CD8-positive, alpha-beta T cell (primary cell): ENCODE measurements at regions of chr5 and their contacts with region 1.

Region 1: DNA sequence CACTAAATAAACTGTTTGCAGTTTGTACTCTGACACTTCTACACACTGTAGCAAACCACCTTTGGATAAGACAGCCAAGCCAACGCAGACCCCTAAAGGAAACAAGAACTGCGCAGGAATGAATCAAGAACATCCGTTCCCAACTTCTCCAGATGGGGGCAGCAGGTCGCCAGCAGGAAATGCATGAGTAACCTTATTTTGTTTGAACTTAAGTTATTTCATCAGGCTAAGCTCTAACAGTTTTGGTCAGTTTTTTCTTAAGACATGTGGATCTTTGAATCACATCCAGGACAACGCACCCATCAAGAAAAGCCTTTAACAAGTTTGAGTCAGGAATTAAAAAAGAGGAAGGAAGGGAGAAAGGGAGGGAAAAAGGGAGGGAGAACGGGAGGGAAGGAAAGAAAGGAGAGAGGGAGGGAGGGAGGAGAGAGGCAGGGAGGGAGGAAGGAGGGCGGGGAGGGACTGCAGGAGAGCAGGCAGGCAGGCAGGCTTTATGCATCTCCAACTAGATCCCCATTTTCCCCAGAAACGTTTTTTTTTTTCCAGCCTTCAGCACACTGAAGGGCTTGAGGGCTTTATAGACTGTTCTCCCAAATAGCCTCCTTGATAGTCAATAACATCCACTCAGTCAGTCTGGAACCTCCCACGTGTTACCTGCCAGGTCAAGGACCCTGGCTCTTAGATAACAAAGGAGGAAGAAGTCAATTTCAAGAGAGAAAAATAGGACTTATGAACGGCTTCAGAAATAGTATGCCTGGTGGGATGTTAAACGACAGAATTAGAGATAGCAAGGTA is 22.2 kb downstream of the BHMT start:
- DNase-seq: peak; percentile 30 to 76 (median 66)
- ATAC-seq: peak; percentile 81
- H3K4me3 ChIP-seq: peak overlapping the region in 1 of 2 experiments; percentile 40
- H3K4me3 Mint-ChIP-seq: peak overlapping the region; percentile 71
- H3K27ac ChIP-seq: no peak overlapping the region
- H3K27ac Mint-ChIP-seq: no peak overlapping the region
- H3K4me1 ChIP-seq: peaks cover 11% of the 10 kb centered on the region
- H3K4me1 Mint-ChIP-seq: peaks cover 8% of the 10 kb centered on the region
- H3K27me3 ChIP-seq: no peaks in the 10 kb centered on the region
- H3K27me3 Mint-ChIP-seq: no peaks in the 10 kb centered on the region
- CTCF ChIP-seq: peak; percentile 23

Region 2: GRCh38 chr5:78320401-78320800 is 813.5 kb before region 1 on chr5:
- CTCF ChIA-PET with region 1: interaction called, 3 read pairs
- POLR2A ChIA-PET with region 1: no interaction called
- intact Hi-C with region 1: loop called (anchors 2 to 5 kb)
- DNase-seq: peak in 2 of 9 experiments; percentile 29 to 47
- ATAC-seq: no peak
- H3K4me3 ChIP-seq: no peak overlapping the region
- H3K4me3 Mint-ChIP-seq: no peak overlapping the region
- H3K27ac ChIP-seq: no peak overlapping the region
- H3K27ac Mint-ChIP-seq: no peak overlapping the region
- H3K4me1 ChIP-seq: no peaks in the 10 kb centered on the region
- H3K4me1 Mint-ChIP-seq: no peaks in the 10 kb centered on the region
- H3K27me3 ChIP-seq: no peaks in the 10 kb centered on the region
- H3K27me3 Mint-ChIP-seq: peaks cover 3% of the 10 kb centered on the region
- CTCF ChIP-seq: peak; percentile 70

Region 3: GRCh38 chr5:78886341-78887230 is 247.3 kb before region 1 on chr5:
- CTCF ChIA-PET with region 1: interaction called, 6 read pairs
- POLR2A ChIA-PET with region 1: no interaction called
- intact Hi-C with region 1: loop called (anchors 1 to 5 kb)
- DNase-seq: peak in 2 of 9 experiments; percentile 9 to 28
- ATAC-seq: no peak
- H3K4me3 ChIP-seq: no peak overlapping the region
- H3K4me3 Mint-ChIP-seq: no peak overlapping the region
- H3K27ac ChIP-seq: no peak overlapping the region
- H3K27ac Mint-ChIP-seq: no peak overlapping the region
- H3K4me1 ChIP-seq: peaks cover 8% of the 10 kb centered on the region
- H3K4me1 Mint-ChIP-seq: peaks cover 16% of the 10 kb centered on the region
- H3K27me3 ChIP-seq: no peaks in the 10 kb centered on the region
- H3K27me3 Mint-ChIP-seq: no peaks in the 10 kb centered on the region
- CTCF ChIP-seq: peak; percentile 51

Region 4: DNA sequence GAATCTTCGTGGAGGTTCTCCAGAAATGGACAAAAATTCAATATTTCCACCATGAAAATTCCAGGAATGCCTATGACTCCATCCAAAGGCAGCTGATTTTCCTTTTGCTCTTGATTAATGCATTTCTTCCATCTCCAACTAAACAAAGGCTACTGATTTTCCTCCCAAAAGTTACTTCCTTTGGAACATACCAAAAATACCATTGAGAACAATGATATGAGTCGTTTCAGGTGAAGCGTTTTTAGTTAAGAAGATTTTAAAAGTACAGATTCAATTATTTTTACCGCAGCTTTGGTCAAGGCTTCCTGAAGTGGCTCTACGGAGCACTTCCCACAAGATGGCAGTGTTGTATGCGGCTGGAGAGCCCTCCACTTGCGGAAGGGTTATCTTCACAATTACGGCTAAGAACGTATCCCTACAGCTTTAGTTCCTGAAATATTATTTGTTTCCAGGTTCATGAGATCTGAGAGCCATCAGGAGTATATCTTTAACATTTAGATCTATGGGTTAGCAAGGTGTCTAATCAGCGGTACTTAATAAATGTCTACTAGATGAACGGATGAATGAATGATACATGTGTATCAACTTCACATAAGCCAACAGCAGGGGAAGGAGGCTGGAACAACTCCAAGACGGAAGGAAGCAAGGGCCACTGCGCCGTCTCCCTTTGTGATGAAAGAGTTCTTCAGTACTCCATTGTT is 112.8 kb before region 1 on chr5:
- CTCF ChIA-PET with region 1: interaction called, 30 read pairs
- POLR2A ChIA-PET with region 1: no interaction called
- intact Hi-C with region 1: loop called (anchors 1 to 2 kb)
- DNase-seq: peak in 5 of 9 experiments; percentile 18 to 54 (median 33)
- ATAC-seq: peak; percentile 38
- H3K4me3 ChIP-seq: no peak overlapping the region
- H3K4me3 Mint-ChIP-seq: no peak overlapping the region
- H3K27ac ChIP-seq: no peak overlapping the region
- H3K27ac Mint-ChIP-seq: no peak overlapping the region
- H3K4me1 ChIP-seq: no peaks in the 10 kb centered on the region
- H3K4me1 Mint-ChIP-seq: peaks cover 11% of the 10 kb centered on the region
- H3K27me3 ChIP-seq: peaks cover 0 to 5% of the 10 kb centered on the region in 2 experiments
- H3K27me3 Mint-ChIP-seq: peaks cover 45% of the 10 kb centered on the region
- CTCF ChIP-seq: peak; percentile 35

Region 5: DNA sequence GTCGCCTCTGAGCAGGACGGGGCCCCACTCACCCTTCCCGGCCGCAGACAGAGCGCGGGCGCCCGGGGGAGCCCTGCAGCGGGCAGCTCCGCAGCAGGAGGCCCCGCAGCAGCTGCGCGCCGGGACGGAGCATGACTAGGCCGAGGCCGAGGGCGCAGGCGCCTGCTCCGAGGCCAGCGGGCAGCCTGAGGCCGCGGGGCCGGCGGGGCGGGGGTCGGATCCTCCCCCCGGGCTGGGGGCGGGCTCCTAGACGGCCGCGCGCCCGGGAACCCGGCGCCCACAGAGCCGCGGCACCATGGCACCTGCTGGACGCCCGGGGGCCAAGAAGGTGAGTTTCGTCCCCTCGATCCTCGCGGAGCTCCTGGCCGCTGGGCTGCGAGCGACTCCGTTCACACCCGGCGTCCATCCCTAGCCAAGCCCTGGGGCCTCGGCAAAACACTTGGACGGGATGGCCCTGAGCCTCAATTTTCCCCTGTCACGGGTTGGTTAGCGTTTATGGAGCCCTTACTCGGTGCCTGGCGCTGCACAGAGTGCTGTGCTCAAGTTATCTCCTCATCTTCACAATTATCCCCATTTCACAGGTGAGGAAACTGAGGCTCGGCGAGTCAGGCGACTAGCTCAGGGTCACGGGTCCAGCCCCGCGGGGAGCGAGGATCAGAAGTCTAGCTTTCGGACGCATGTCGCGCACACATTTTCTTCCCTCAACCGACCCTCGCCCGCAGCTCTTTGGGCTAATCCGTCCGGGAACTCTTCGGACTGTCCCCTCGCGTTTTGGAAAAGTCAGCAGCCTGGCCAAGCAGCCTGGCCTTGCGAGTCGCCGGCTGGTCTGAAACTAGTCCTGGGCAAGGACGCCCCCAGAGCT is 64.1 kb before region 1 on chr5 and contains the starts of genes BHMT2 and DMGDH:
- CTCF ChIA-PET with region 1: no interaction called
- POLR2A ChIA-PET with region 1: no interaction called
- intact Hi-C with region 1: no loop called
- DNase-seq: no peak
- ATAC-seq: no peak
- H3K4me3 ChIP-seq: no peak within 1 kb of the TSS
- H3K4me3 Mint-ChIP-seq: no peak within 1 kb of the TSS
- H3K27ac ChIP-seq: no peak within 1 kb of the TSS
- H3K27ac Mint-ChIP-seq: no peak within 1 kb of the TSS
- H3K4me1 ChIP-seq: no peaks in the 10 kb centered on the region
- H3K4me1 Mint-ChIP-seq: peaks cover 2% of the 10 kb centered on the region
- H3K27me3 ChIP-seq: peaks cover 0 to 3% of the 10 kb centered on the region in 2 experiments
- H3K27me3 Mint-ChIP-seq: peaks cover 39% of the 10 kb centered on the region
- CTCF ChIP-seq: no peak
- total RNA-seq, gene BHMT2: not detected
- total RNA-seq, gene DMGDH: 0.90 TPM in 1 of 2 experiments, not detected in the other

Region 6: GRCh38 chr5:79120216-79120615 is 13.6 kb before region 1 on chr5:
- CTCF ChIA-PET with region 1: interaction called, 29 read pairs
- POLR2A ChIA-PET with region 1: no interaction called
- intact Hi-C with region 1: no loop called
- DNase-seq: no peak
- ATAC-seq: no peak
- H3K4me3 ChIP-seq: no peak overlapping the region
- H3K4me3 Mint-ChIP-seq: no peak overlapping the region
- H3K27ac ChIP-seq: no peak overlapping the region
- H3K27ac Mint-ChIP-seq: no peak overlapping the region
- H3K4me1 ChIP-seq: no peaks in the 10 kb centered on the region
- H3K4me1 Mint-ChIP-seq: no peaks in the 10 kb centered on the region
- H3K27me3 ChIP-seq: no peaks in the 10 kb centered on the region
- H3K27me3 Mint-ChIP-seq: peaks cover 6% of the 10 kb centered on the region
- CTCF ChIP-seq: no peak

Region 7: GRCh38 chr5:79464695-79465332 is 331.0 kb after region 1 on chr5:
- CTCF ChIA-PET with region 1: interaction called, 16 read pairs
- POLR2A ChIA-PET with region 1: no interaction called
- intact Hi-C with region 1: loop called (anchors 1 kb)
- DNase-seq: peak in 2 of 9 experiments; percentile 15 to 42
- ATAC-seq: peak; percentile 66
- H3K4me3 ChIP-seq: no peak overlapping the region
- H3K4me3 Mint-ChIP-seq: no peak overlapping the region
- H3K27ac ChIP-seq: no peak overlapping the region
- H3K27ac Mint-ChIP-seq: no peak overlapping the region
- H3K4me1 ChIP-seq: no peaks in the 10 kb centered on the region
- H3K4me1 Mint-ChIP-seq: peaks cover 3% of the 10 kb centered on the region
- H3K27me3 ChIP-seq: no peaks in the 10 kb centered on the region
- H3K27me3 Mint-ChIP-seq: no peaks in the 10 kb centered on the region
- CTCF ChIP-seq: peak; percentile 66

Region 8: DNA sequence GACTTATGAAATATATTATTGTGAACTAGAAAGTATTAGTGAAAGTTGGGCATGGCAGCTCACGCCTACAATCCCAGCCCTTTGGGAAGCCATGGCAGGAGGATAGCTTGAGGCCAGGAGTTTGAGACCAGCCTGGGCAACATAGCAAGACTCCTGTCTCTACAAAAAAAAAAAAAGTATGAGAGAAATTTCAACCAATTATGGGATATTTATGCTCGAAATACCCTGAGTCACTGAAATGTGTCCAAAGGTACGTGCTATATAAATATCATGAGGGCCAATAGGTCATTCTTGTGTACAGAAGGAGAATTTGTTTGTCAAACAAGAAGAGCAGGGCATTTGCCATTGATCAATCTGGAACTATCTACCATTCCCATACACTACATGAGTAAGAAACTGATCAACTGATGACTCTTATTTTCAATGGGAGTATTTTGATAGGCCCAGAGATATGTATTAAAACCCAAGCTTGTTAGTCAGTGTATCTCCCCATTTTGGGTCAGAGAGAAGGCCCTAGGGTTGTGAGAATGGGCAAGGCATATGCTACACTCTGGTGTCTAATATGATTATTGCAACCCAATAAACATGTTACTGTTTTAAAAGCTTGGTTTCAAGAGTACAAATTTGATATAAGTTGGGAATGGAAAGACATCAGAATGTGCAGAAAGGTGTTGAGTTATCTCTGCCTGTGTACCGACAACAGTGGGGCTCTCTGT is 401.8 kb after region 1 on chr5:
- CTCF ChIA-PET with region 1: interaction called, 3 read pairs
- POLR2A ChIA-PET with region 1: no interaction called
- intact Hi-C with region 1: loop called in 1 of 2 experiments (anchors 5 kb)
- DNase-seq: peak in 2 of 9 experiments; percentile 15 to 24
- ATAC-seq: no peak
- H3K4me3 ChIP-seq: no peak overlapping the region
- H3K4me3 Mint-ChIP-seq: no peak overlapping the region
- H3K27ac ChIP-seq: no peak overlapping the region
- H3K27ac Mint-ChIP-seq: no peak overlapping the region
- H3K4me1 ChIP-seq: no peaks in the 10 kb centered on the region
- H3K4me1 Mint-ChIP-seq: no peaks in the 10 kb centered on the region
- H3K27me3 ChIP-seq: no peaks in the 10 kb centered on the region
- H3K27me3 Mint-ChIP-seq: peaks cover 8% of the 10 kb centered on the region
- CTCF ChIP-seq: peak; percentile 28

Region 9: GRCh38 chr5:79663212-79663611 is 529.4 kb after region 1 on chr5:
- CTCF ChIA-PET with region 1: no interaction called
- POLR2A ChIA-PET with region 1: no interaction called
- intact Hi-C with region 1: no loop called
- DNase-seq: no peak
- ATAC-seq: no peak
- H3K4me3 ChIP-seq: no peak overlapping the region
- H3K4me3 Mint-ChIP-seq: no peak overlapping the region
- H3K27ac ChIP-seq: no peak overlapping the region
- H3K27ac Mint-ChIP-seq: no peak overlapping the region
- H3K4me1 ChIP-seq: no peaks in the 10 kb centered on the region
- H3K4me1 Mint-ChIP-seq: no peaks in the 10 kb centered on the region
- H3K27me3 ChIP-seq: no peaks in the 10 kb centered on the region
- H3K27me3 Mint-ChIP-seq: no peaks in the 10 kb centered on the region
- CTCF ChIP-seq: no peak